ENCODE measurements at regions of chr11 and their contacts with region 1.

Region 1: DNA sequence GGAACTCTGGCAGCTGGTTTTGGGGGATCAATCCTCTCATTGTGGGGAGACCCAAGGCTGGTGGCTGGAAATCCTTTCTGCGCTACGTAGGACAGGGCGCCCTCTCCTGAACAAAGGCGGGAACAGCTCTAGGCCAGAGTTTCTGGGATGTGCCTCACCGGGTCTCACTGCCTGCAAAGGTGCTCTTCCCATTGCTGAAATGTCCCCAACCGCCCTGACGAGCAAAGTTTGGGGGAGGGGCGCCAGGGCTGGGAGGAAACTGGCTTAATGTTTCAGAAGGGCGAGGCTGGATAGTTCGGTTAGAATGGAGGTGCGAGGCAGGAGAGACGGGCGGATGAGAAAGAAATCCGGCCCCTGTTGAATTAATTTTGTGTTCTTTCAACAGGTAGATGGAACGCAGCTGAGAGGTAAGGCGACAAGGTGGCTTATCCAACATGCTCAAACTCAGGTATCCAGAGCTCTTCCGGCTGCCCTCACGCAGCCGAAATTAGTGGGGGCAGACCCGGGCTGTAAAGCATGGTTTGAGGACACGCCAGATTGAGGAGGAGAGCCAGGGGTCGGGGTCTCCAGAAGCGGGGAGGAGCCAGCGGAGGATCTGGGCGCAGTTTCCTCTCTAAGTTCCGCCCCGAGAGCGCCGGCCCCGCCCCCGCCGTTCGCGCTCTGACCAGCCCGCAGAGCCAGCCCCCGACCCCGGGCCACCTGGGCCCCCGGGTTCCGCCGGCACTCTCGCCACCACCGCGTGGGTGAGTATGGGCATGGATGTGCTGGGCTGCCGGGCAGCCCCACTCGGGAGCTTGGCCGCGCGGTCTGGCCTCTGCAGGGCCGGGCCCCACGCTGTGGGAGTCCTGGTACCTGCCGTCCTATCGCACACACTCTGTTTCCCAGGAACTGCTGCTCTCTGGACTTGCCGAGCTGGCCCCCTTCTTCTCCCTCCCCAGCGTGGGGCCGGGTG is at the start of gene PGAP2:
- DNase-seq: peak; percentile 81
- H3K4me3 Mint-ChIP-seq: peak within 1 kb of the TSS; percentile 97
- H3K27ac Mint-ChIP-seq: peak within 1 kb of the TSS; percentile 91
- H3K4me1 Mint-ChIP-seq: peaks cover 18% of the 10 kb centered on the region
- H3K27me3 Mint-ChIP-seq: no peaks in the 10 kb centered on the region
- total RNA-seq, gene PGAP2: 38.9 to 40.8 TPM

Region 2: GRCh38 chr11:3674189-3674588 is 134.0 kb before region 1 on chr11:
- CTCF ChIA-PET with region 1: interaction called, 10 read pairs
- intact Hi-C with region 1: no loop called
- DNase-seq: no peak
- H3K4me3 Mint-ChIP-seq: no peak overlapping the region
- H3K27ac Mint-ChIP-seq: no peak overlapping the region
- H3K4me1 Mint-ChIP-seq: peaks cover 3% of the 10 kb centered on the region
- H3K27me3 Mint-ChIP-seq: no peaks in the 10 kb centered on the region

Region 3: DNA sequence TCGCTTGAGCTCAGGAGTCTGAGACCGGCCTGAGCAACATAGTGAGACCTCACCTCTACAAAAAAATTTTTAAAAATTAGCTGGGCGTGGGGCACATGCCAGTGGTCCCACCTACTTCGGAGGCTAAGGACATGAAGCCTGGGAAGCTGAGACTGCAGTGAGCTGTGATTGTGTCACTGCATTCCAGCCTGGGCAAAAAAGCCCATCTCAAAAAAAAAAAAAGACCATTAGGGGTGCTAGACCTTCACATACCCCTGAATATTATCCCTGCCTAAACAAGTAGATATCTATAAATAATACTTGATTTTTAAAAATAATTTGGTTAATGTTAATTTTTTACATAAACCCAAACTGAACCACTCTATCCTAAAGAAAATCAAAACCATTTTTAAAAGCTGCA is 35.0 kb before region 1 on chr11:
- CTCF ChIA-PET with region 1: interaction called, 11 read pairs
- intact Hi-C with region 1: loop called (anchors 5 kb)
- DNase-seq: no peak
- H3K4me3 Mint-ChIP-seq: no peak overlapping the region
- H3K27ac Mint-ChIP-seq: no peak overlapping the region
- H3K4me1 Mint-ChIP-seq: no peaks in the 10 kb centered on the region
- H3K27me3 Mint-ChIP-seq: no peaks in the 10 kb centered on the region

Region 4: GRCh38 chr11:3797329-3798095 is 10.7 kb before region 1 on chr11 and contains the start of gene NUP98:
- CTCF ChIA-PET with region 1: interaction called, 25 read pairs
- intact Hi-C with region 1: no loop called
- DNase-seq: peak; percentile 100
- H3K4me3 Mint-ChIP-seq: peak within 1 kb of the TSS; percentile 98
- H3K27ac Mint-ChIP-seq: peak within 1 kb of the TSS; percentile 98
- H3K4me1 Mint-ChIP-seq: peaks cover 54% of the 10 kb centered on the region
- H3K27me3 Mint-ChIP-seq: no peaks in the 10 kb centered on the region
- total RNA-seq, gene NUP98: 90.8 to 97.6 TPM

Region 5: GRCh38 chr11:3831378-3832239 is 23.4 kb after region 1 on chr11:
- CTCF ChIA-PET with region 1: interaction called, 11 read pairs
- intact Hi-C with region 1: no loop called
- DNase-seq: no peak
- H3K4me3 Mint-ChIP-seq: peak overlapping the region; percentile 0
- H3K27ac Mint-ChIP-seq: peak overlapping the region; percentile 86
- H3K4me1 Mint-ChIP-seq: peaks cover 70% of the 10 kb centered on the region
- H3K27me3 Mint-ChIP-seq: no peaks in the 10 kb centered on the region